ENCODE measurements at regions of chr22 and their contacts with region 1.

Region 1: GRCh38 chr22:36781656-36782627 is 6.0 kb upstream of the IFT27 start:
- DNase-seq: peak; percentile 87
- ATAC-seq: peak; percentile 85

Region 2: GRCh38 chr22:37043828-37044538 is 262.0 kb after region 1 on chr22:
- intact Hi-C with region 1: loop called (anchors 1 kb)
- DNase-seq: peak; percentile 83
- ATAC-seq: peak; percentile 82